Dorsolateral prefrontal cortex (tissue), 120 donors: ENCODE measurements at regions of chr2 and their contacts with region 1.

Region 1: DNA sequence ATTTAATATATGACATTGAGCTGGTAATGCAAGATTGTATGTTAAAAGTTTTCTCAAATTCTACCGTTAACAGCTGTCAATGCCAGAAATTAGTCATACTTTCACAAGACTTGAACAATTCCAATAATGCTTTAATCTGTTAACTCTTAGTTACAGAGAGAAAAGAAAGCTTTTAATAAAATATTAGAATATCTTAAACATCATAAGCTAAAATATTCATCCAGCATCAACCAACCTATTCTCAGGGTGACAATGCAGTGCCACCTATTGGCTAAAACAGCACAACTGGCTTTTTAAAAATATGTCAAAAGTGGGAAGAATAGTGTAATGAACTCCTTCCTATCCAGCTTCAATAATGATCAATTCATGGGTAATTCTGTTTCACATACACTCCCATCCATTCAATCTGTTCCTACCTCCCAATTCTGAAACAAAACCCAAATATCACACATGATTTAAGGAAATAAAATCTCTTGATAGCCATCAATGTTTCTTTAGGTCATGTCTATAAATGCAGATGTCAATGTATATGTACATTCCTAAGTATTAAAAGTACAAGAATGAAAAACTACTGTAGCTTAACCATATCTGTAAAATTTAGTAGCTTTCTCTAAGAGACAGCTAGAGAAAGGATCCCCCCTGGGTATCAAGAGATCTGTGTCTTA is 79.8 kb upstream of the CCDC141 start:
- DNase-seq: no peak
- H3K4me3 ChIP-seq: no peak overlapping the region
- H3K27ac ChIP-seq: no peak overlapping the region
- H3K27me3 ChIP-seq: no peaks in the 10 kb centered on the region
- CTCF ChIP-seq: peak; percentile 34 to 82 (median 63)

Region 2: DNA sequence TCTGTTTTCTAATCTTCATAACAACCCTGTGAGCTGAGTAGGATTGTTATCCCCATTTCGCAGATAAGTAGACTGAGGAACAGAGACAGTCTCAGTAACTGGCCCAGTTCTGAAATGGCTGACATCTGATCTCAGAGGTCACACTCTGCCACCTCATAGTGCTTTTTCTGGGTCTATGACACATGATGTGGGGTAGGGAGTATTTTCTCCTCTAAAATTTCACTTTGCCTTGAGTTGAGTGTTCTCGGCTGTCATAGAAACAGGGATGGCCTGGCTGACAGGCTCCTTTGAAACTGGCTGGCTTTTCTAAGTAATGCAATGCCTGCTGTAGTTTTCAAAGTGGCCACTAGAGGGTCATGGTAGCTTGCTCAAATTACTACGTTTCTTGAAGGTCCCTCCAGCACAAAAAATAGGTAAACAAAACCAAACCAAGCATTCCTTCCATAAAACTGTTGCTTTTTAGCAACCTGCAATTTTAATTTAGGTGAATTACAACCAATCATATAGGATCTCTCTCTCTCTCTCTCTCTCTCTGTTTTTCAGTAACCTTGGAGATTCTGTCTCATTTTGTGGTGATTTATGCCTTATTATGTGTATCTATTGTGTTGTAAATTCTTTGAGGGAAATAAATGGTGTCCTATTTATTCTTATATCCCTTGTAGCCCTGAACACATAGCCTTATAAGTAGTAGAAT is 238.3 kb before region 1 on chr2:
- intact Hi-C with region 1: loop called in 1 of 2 experiments (anchors 10 kb)
- DNase-seq: peak in 5 of 10 donors; percentile 23 to 80 (median 54)
- H3K4me3 ChIP-seq: no peak overlapping the region
- H3K27ac ChIP-seq: no peak overlapping the region
- H3K27me3 ChIP-seq: no peaks in the 10 kb centered on the region
- CTCF ChIP-seq: peak; percentile 81 to 96 (median 92)